ENCODE measurements at regions of chr5 and their contacts with region 1.

Region 1: GRCh38 chr5:63963080-63963735 is 963 bp upstream of the HTR1A start:
- DNase-seq: peak; percentile 18
- H3K4me3 ChIP-seq: no peak overlapping the region
- H3K27ac ChIP-seq: no peak overlapping the region
- H3K27me3 ChIP-seq: peaks cover 4% of the 10 kb centered on the region
- CTCF ChIP-seq: peak; percentile 68

Region 2: GRCh38 chr5:63125862-63126261 is 837.3 kb before region 1 on chr5:
- CTCF ChIA-PET with region 1: interaction called, 15 read pairs
- POLR2A ChIA-PET with region 1: no interaction called
- DNase-seq: no peak
- H3K4me3 ChIP-seq: no peak overlapping the region
- H3K27ac ChIP-seq: no peak overlapping the region
- H3K27me3 ChIP-seq: no peaks in the 10 kb centered on the region
- CTCF ChIP-seq: peak; percentile 63

Region 3: DNA sequence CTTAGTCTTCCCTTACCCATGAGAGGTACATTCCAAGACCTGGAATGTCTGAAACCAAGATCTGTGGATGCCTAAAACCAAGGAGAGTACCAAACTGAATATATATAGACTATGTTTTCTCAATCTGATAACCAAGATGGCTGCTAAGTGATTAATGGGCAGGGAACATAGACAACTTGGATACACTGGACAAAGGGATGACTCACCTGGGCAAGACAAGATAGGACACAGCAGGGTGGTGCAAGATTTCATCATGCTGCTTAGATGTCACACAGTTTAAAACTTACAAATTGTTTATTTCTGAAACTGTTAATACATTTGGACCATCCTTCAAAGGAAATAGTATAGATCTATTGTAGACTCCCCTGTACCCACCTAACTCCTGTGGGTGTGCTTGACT is 131.8 kb before region 1 on chr5:
- CTCF ChIA-PET with region 1: no interaction called
- POLR2A ChIA-PET with region 1: no interaction called
- DNase-seq: no peak
- H3K4me3 ChIP-seq: no peak overlapping the region
- H3K27ac ChIP-seq: no peak overlapping the region
- H3K27me3 ChIP-seq: no peaks in the 10 kb centered on the region
- CTCF ChIP-seq: no peak